Caco-2 (cell line): ENCODE measurements at regions of chr4 and their contacts with region 1.

Region 1: DNA sequence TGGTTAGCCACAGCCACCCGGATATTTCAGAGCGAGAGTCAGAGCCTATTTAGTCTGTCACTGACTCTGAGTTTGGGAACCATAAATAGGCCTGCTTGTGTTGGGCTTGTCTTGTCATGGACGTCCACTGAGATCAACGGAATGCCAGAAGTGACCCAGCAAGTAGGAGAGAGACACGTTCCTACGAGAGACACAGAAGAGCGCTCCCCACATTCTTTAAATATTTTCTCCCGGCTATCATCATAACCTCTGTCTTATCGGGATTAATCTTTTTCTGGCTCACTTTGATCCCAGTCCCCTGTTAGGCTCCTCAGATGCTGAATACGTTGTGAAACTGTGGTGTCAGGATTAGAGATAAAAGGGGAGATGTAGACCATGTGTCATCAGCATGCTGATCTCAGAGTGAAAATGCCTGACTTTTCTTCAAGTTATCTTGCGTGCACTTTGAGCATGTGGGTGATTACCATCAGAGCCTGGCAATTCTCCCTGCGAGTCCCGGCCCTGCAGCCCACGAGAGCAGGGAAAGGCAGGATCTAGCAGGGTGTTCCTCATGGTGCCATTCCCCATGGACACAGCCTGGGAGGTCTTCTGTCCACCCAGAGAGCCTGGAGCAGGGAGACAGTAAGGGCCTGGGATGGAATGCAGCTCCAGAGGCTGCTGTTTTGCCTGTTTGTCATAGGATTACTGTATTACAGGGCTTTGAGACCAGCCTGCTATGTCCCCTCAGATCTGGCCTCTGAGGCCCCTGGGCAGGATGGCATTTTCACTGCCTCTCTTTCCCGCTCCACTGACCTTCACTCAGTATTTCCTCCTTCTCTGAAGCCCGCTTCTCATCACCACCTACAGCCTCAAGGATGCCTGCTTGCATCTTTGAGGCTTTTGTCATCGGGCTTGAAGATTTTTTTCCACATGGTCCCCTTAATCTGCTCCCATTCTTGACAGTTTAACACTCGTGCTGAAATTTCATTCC is 2.8 kb upstream of the TENM3 start:
- DNase-seq: peak; percentile 83 to 90
- H3K4me3 ChIP-seq: peak overlapping the region; percentile 21
- H3K4me3 Mint-ChIP-seq: peak overlapping the region; percentile 45
- H3K27ac Mint-ChIP-seq: peak overlapping the region; percentile 96
- H3K4me1 ChIP-seq: peaks cover 57% of the 10 kb centered on the region
- H3K4me1 Mint-ChIP-seq: peaks cover 45% of the 10 kb centered on the region
- H3K27me3 ChIP-seq: no peaks in the 10 kb centered on the region
- H3K27me3 Mint-ChIP-seq: no peaks in the 10 kb centered on the region
- CTCF ChIP-seq: no peak

Region 2: GRCh38 chr4:182143822-182144625 is 96.4 kb before region 1 on chr4:
- CTCF ChIA-PET with region 1: no interaction called
- POLR2A ChIA-PET with region 1: interaction called, 6 read pairs
- intact Hi-C with region 1: loop called (anchors 1 kb)
- DNase-seq: peak; percentile 72 to 75
- H3K4me3 ChIP-seq: peak overlapping the region; percentile 90
- H3K4me3 Mint-ChIP-seq: peak overlapping the region; percentile 86
- H3K27ac Mint-ChIP-seq: peak overlapping the region; percentile 98
- H3K4me1 ChIP-seq: peaks cover 37% of the 10 kb centered on the region
- H3K4me1 Mint-ChIP-seq: peaks cover 7% of the 10 kb centered on the region
- H3K27me3 ChIP-seq: no peaks in the 10 kb centered on the region
- H3K27me3 Mint-ChIP-seq: no peaks in the 10 kb centered on the region
- CTCF ChIP-seq: no peak

Region 3: GRCh38 chr4:182207830-182208396 is 32.5 kb before region 1 on chr4:
- CTCF ChIA-PET with region 1: no interaction called
- POLR2A ChIA-PET with region 1: no interaction called
- intact Hi-C with region 1: loop called (anchors 1 kb)
- DNase-seq: no peak
- H3K4me3 ChIP-seq: no peak overlapping the region
- H3K4me3 Mint-ChIP-seq: no peak overlapping the region
- H3K27ac Mint-ChIP-seq: peak overlapping the region; percentile 60
- H3K4me1 ChIP-seq: peaks cover 60% of the 10 kb centered on the region
- H3K4me1 Mint-ChIP-seq: peaks cover 42% of the 10 kb centered on the region
- H3K27me3 ChIP-seq: no peaks in the 10 kb centered on the region
- H3K27me3 Mint-ChIP-seq: no peaks in the 10 kb centered on the region
- CTCF ChIP-seq: no peak

Region 4: DNA sequence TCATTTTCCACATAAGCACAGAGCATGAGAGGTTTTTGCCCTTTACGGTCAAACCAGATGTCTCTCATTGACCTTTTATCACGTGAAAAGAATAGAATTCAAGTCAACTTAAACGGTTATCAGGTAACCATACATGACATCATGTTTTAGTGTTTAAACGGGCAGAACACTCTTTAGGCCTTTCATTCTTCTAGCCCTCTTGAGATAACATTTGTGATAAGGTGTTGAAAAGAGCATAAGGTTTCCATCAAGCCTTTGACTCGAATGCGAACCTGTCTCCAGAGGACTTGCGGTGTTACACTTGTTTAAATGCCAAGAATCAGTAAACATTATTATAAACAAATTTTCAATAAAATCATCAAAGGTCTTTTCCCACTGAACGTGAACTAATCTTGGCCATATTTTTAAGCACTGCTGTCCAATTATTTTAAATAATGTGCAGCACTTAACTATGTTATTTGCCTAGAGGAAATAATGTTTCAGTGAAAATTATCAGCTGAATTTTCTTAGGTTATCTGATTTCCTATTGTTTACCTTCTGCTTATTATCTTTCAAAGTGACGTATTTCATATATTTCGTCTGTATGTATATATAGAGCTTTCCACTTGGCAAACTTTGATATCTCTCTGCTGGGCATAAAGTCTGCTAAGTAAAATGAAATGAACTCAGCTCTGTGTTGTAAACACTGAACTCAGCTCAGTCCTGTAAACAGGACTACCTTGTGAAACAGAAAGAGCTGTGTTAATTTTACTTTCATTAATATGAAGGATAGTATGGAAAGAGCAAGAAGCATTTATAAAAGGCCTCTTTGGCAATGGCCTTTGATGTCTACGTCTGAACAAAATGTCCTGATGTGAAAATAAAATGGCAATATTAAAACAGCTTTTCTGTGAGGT is 36.0 kb after region 1 on chr4:
- CTCF ChIA-PET with region 1: no interaction called
- POLR2A ChIA-PET with region 1: no interaction called
- intact Hi-C with region 1: loop called (anchors 1 kb)
- DNase-seq: peak in 1 of 2 experiments; percentile 41
- H3K4me3 ChIP-seq: no peak overlapping the region
- H3K4me3 Mint-ChIP-seq: peak overlapping the region; percentile 22
- H3K27ac Mint-ChIP-seq: peak overlapping the region; percentile 26
- H3K4me1 ChIP-seq: peaks cover 65% of the 10 kb centered on the region
- H3K4me1 Mint-ChIP-seq: peaks cover 28% of the 10 kb centered on the region
- H3K27me3 ChIP-seq: no peaks in the 10 kb centered on the region
- H3K27me3 Mint-ChIP-seq: no peaks in the 10 kb centered on the region
- CTCF ChIP-seq: no peak

Region 5: GRCh38 chr4:182339221-182339641 is 98.8 kb after region 1 on chr4:
- CTCF ChIA-PET with region 1: no interaction called
- POLR2A ChIA-PET with region 1: no interaction called
- intact Hi-C with region 1: loop called (anchors 5 kb)
- DNase-seq: no peak
- H3K4me3 ChIP-seq: no peak overlapping the region
- H3K4me3 Mint-ChIP-seq: no peak overlapping the region
- H3K27ac Mint-ChIP-seq: no peak overlapping the region
- H3K4me1 ChIP-seq: peaks cover 31% of the 10 kb centered on the region
- H3K4me1 Mint-ChIP-seq: peaks cover 21% of the 10 kb centered on the region
- H3K27me3 ChIP-seq: no peaks in the 10 kb centered on the region
- H3K27me3 Mint-ChIP-seq: no peaks in the 10 kb centered on the region
- CTCF ChIP-seq: no peak

Region 6: GRCh38 chr4:182448281-182449151 is 208.1 kb after region 1 on chr4:
- CTCF ChIA-PET with region 1: no interaction called
- POLR2A ChIA-PET with region 1: no interaction called
- intact Hi-C with region 1: loop called (anchors 2 kb)
- DNase-seq: peak; percentile 92
- H3K4me3 ChIP-seq: peak overlapping the region; percentile 90
- H3K4me3 Mint-ChIP-seq: peak overlapping the region; percentile 81
- H3K27ac Mint-ChIP-seq: peak overlapping the region; percentile 83
- H3K4me1 ChIP-seq: peaks cover 3% of the 10 kb centered on the region; the same call in 1 of the 2 replicates
- H3K4me1 Mint-ChIP-seq: peaks cover 27% of the 10 kb centered on the region
- H3K27me3 ChIP-seq: no peaks in the 10 kb centered on the region
- H3K27me3 Mint-ChIP-seq: no peaks in the 10 kb centered on the region
- CTCF ChIP-seq: no peak